IMR-90 (cell line): ENCODE measurements at regions of chr10 and their contacts with region 1.

Region 1: GRCh38 chr10:104045151-104046089 is 40.3 kb downstream of the COL17A1 start:
- DNase-seq: peak; percentile 76
- ATAC-seq: peak; percentile 96
- H3K4me3 ChIP-seq: no peak overlapping the region
- H3K27ac ChIP-seq: no peak overlapping the region
- H3K4me1 ChIP-seq: 0 out of 2 replicates have a peak, but pooled peaks cover 3% of the 10 kb centered on the region
- H3K27me3 ChIP-seq: no peaks in the 10 kb centered on the region
- CTCF ChIP-seq: peak; percentile 95
- POLR2A ChIP-seq: peak; percentile 49; the same call in 1 of the 2 replicates
- RAD21 ChIP-seq: peak; percentile 99

Region 2: GRCh38 chr10:103879409-103879808 is 166.0 kb before region 1 on chr10:
- CTCF ChIA-PET with region 1: no interaction called
- POLR2A ChIA-PET with region 1: no interaction called
- dilution Hi-C with region 1: no loop called
- in situ Hi-C with region 1: no loop called
- intact Hi-C with region 1: no loop called
- DNase-seq: no peak
- ATAC-seq: no peak
- H3K4me3 ChIP-seq: no peak overlapping the region
- H3K27ac ChIP-seq: no peak overlapping the region
- H3K4me1 ChIP-seq: peaks cover under 1% of the 10 kb centered on the region; the same call in 1 of the 2 replicates
- H3K27me3 ChIP-seq: no peaks in the 10 kb centered on the region
- CTCF ChIP-seq: no peak
- POLR2A ChIP-seq: no peak
- RAD21 ChIP-seq: no peak

Region 3: GRCh38 chr10:103918053-103918846 is 127.2 kb before region 1 on chr10 and contains the start of gene STN1:
- CTCF ChIA-PET with region 1: interaction called, 10 read pairs
- POLR2A ChIA-PET with region 1: no interaction called
- dilution Hi-C with region 1: no loop called
- in situ Hi-C with region 1: no loop called
- intact Hi-C with region 1: no loop called
- DNase-seq: peak; percentile 96
- ATAC-seq: peak; percentile 97
- H3K4me3 ChIP-seq: peak within 1 kb of the TSS; percentile 88
- H3K27ac ChIP-seq: peak within 1 kb of the TSS; percentile 96
- H3K4me1 ChIP-seq: peaks cover 6% of the 10 kb centered on the region
- H3K27me3 ChIP-seq: no peaks in the 10 kb centered on the region
- CTCF ChIP-seq: 0 out of 2 replicates have a peak, but pooled peaks have one; percentile 13
- POLR2A ChIP-seq: peak; percentile 85
- RAD21 ChIP-seq: no peak
- total RNA-seq, gene STN1: 28.6 and 32.3 TPM in 2 replicates

Region 4: GRCh38 chr10:104002911-104003310 is 42.5 kb before region 1 on chr10:
- CTCF ChIA-PET with region 1: no interaction called
- POLR2A ChIA-PET with region 1: no interaction called
- dilution Hi-C with region 1: no loop called
- in situ Hi-C with region 1: no loop called
- intact Hi-C with region 1: no loop called
- DNase-seq: no peak
- ATAC-seq: no peak
- H3K4me3 ChIP-seq: no peak overlapping the region
- H3K27ac ChIP-seq: no peak overlapping the region
- H3K4me1 ChIP-seq: no peaks in the 10 kb centered on the region
- H3K27me3 ChIP-seq: no peaks in the 10 kb centered on the region
- CTCF ChIP-seq: no peak
- POLR2A ChIP-seq: no peak
- RAD21 ChIP-seq: no peak

Region 5: GRCh38 chr10:104121520-104122224 is 76.3 kb after region 1 on chr10 and contains the start of gene SFR1:
- CTCF ChIA-PET with region 1: interaction called, 3 read pairs
- POLR2A ChIA-PET with region 1: no interaction called
- dilution Hi-C with region 1: no loop called
- in situ Hi-C with region 1: no loop called
- intact Hi-C with region 1: loop called (anchors 1 kb)
- DNase-seq: peak; percentile 97
- ATAC-seq: peak; percentile 98
- H3K4me3 ChIP-seq: peak within 1 kb of the TSS; percentile 85
- H3K27ac ChIP-seq: peak within 1 kb of the TSS; percentile 93
- H3K4me1 ChIP-seq: no peaks in the 10 kb centered on the region; the same call in 1 of the 2 replicates
- H3K27me3 ChIP-seq: no peaks in the 10 kb centered on the region
- CTCF ChIP-seq: peak; percentile 82
- POLR2A ChIP-seq: peak; percentile 93
- RAD21 ChIP-seq: peak; percentile 56
- total RNA-seq, gene SFR1: 1.6 and 5.6 TPM in 2 replicates

Region 6: GRCh38 chr10:104209575-104210198 is 164.3 kb after region 1 on chr10:
- CTCF ChIA-PET with region 1: no interaction called
- POLR2A ChIA-PET with region 1: no interaction called
- dilution Hi-C with region 1: no loop called
- in situ Hi-C with region 1: loop called (anchors 5 kb)
- intact Hi-C with region 1: loop called (anchors 1 kb)
- DNase-seq: peak; percentile 39
- ATAC-seq: peak; percentile 79
- H3K4me3 ChIP-seq: no peak overlapping the region
- H3K27ac ChIP-seq: no peak overlapping the region
- H3K4me1 ChIP-seq: no peaks in the 10 kb centered on the region
- H3K27me3 ChIP-seq: peaks cover 29% of the 10 kb centered on the region
- CTCF ChIP-seq: peak; percentile 64
- POLR2A ChIP-seq: no peak
- RAD21 ChIP-seq: peak; percentile 68

Region 7: DNA sequence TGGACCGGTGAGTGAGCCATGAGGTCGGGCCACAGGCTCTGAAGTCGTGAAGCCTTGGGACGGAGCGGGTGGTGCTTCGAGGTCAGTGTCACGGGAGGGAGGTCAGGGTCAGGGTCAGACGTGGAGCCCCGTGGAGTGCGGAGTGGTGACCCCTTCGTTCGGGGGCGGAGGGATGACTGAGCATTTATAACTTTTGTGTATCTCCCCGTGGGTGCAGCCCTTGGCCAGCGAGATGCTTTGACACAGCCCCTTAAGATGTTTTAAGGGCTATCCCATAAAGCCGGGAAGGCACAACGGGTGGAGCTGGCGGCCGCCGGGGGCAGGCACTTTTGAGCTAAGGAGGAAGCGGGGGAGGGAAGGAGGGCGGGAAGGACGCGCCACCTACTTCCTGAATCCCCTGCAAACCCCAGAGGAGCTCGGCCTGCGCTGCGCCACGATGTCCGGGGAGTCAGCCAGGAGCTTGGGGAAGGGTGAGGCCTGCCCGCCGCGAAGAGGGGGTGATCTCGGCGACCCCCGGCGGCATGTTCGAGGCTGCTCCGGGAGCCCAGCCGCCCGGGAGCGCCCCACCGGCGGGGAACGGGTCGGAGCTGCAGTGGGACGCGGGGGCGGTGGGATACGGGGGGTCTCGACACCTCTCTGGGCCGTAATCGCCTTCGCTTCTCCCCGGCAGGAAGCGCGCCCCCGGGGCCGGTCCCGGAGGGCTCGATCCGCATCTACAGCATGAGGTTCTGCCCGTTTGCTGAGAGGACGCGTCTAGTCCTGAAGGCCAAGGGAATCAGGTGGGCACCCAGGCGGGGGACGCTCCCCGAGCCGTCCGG is 209.3 kb after region 1 on chr10 and contains the start of gene GSTO1:
- CTCF ChIA-PET with region 1: no interaction called
- POLR2A ChIA-PET with region 1: no interaction called
- dilution Hi-C with region 1: no loop called
- in situ Hi-C with region 1: no loop called
- intact Hi-C with region 1: loop called (anchors 2 kb)
- DNase-seq: peak; percentile 76
- ATAC-seq: peak; percentile 89
- H3K4me3 ChIP-seq: peak within 1 kb of the TSS; percentile 96
- H3K27ac ChIP-seq: peak within 1 kb of the TSS; percentile 96
- H3K4me1 ChIP-seq: peaks cover 8% of the 10 kb centered on the region
- H3K27me3 ChIP-seq: no peaks in the 10 kb centered on the region
- CTCF ChIP-seq: no peak
- POLR2A ChIP-seq: peak; percentile 76
- RAD21 ChIP-seq: no peak
- total RNA-seq, gene GSTO1: 258 and 330 TPM in 2 replicates

Region 8: GRCh38 chr10:104353325-104354048 is 308.1 kb after region 1 on chr10 and contains the start of gene CFAP58:
- CTCF ChIA-PET with region 1: no interaction called
- POLR2A ChIA-PET with region 1: no interaction called
- dilution Hi-C with region 1: no loop called
- in situ Hi-C with region 1: loop called (anchors 5 kb)
- intact Hi-C with region 1: loop called (anchors 1 kb)
- DNase-seq: peak; percentile 70
- ATAC-seq: peak; percentile 87
- H3K4me3 ChIP-seq: peak within 1 kb of the TSS; percentile 53
- H3K27ac ChIP-seq: no peak within 1 kb of the TSS; the same call in 1 of the 2 replicates
- H3K4me1 ChIP-seq: peaks cover 7% of the 10 kb centered on the region; the same call in 1 of the 2 replicates
- H3K27me3 ChIP-seq: peaks cover 3% of the 10 kb centered on the region; the same call in 1 of the 2 replicates
- CTCF ChIP-seq: peak; percentile 67
- POLR2A ChIP-seq: no peak
- RAD21 ChIP-seq: no peak
- total RNA-seq, gene CFAP58: 0.36 and 0.83 TPM in 2 replicates